CD8-positive, alpha-beta T cell (primary cell): ENCODE measurements at regions of chr7 and their contacts with region 1.

Region 1: DNA sequence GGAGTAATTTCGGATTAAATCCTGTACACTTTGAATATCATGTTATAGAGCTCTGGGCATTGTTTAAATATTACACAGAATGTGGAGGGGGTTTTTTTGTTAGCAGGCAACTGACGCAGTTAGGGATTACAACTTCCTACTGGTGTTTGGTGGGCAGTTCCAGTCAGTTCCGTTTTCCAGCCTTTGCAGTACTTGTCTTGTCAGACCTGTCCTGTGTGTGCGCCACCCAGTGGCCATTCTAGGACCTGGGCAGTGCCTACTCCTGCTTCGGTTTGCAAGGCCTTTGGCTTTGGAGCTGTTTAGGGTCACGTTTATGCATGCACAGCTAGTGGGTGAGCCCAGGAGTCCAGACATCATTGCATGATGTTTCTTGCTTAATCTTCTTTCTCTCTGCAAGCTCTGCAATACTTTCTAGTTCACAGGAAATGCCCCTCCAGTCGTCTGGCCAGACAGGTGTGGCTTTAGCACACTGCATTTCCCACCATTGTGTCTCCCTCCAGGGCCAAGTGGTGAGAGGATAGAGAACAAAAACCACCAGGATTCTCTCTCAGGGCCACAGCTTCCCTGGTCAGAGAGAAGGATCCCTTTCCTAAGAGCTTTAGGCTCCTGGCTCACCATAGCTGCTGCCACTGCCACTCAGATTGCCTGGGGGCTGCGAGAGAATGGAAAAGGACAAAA is 96.5 kb upstream of the TARP start:
- DNase-seq: peak; percentile 44 to 91 (median 86)
- ATAC-seq: peak; percentile 67
- H3K4me3 ChIP-seq: peak overlapping the region in 1 of 2 experiments; percentile 6
- H3K4me3 Mint-ChIP-seq: peak overlapping the region; percentile 57
- H3K27ac ChIP-seq: peak overlapping the region; percentile 36 to 79
- H3K27ac Mint-ChIP-seq: peak overlapping the region; percentile 93
- H3K4me1 ChIP-seq: peaks cover 61% of the 10 kb centered on the region
- H3K4me1 Mint-ChIP-seq: peaks cover 80% of the 10 kb centered on the region
- H3K27me3 ChIP-seq: no peaks in the 10 kb centered on the region
- H3K27me3 Mint-ChIP-seq: no peaks in the 10 kb centered on the region
- CTCF ChIP-seq: peak; percentile 77

Region 2: GRCh38 chr7:37916673-37917660 is 453.0 kb before region 1 on chr7 and contains the start of gene SFRP4:
- CTCF ChIA-PET with region 1: no interaction called
- POLR2A ChIA-PET with region 1: no interaction called
- intact Hi-C with region 1: loop called in 1 of 2 experiments (anchors 10 kb)
- DNase-seq: peak in 2 of 9 experiments; percentile 13 to 31
- ATAC-seq: no peak
- H3K4me3 ChIP-seq: no peak within 1 kb of the TSS
- H3K4me3 Mint-ChIP-seq: peak within 1 kb of the TSS; percentile 43
- H3K27ac ChIP-seq: no peak within 1 kb of the TSS
- H3K27ac Mint-ChIP-seq: no peak within 1 kb of the TSS
- H3K4me1 ChIP-seq: peaks cover 5% of the 10 kb centered on the region
- H3K4me1 Mint-ChIP-seq: peaks cover 20% of the 10 kb centered on the region
- H3K27me3 ChIP-seq: peaks cover 4 to 15% of the 10 kb centered on the region in 2 experiments
- H3K27me3 Mint-ChIP-seq: peaks cover 58% of the 10 kb centered on the region
- CTCF ChIP-seq: peak; percentile 27
- total RNA-seq, gene SFRP4: not detected

Region 3: DNA sequence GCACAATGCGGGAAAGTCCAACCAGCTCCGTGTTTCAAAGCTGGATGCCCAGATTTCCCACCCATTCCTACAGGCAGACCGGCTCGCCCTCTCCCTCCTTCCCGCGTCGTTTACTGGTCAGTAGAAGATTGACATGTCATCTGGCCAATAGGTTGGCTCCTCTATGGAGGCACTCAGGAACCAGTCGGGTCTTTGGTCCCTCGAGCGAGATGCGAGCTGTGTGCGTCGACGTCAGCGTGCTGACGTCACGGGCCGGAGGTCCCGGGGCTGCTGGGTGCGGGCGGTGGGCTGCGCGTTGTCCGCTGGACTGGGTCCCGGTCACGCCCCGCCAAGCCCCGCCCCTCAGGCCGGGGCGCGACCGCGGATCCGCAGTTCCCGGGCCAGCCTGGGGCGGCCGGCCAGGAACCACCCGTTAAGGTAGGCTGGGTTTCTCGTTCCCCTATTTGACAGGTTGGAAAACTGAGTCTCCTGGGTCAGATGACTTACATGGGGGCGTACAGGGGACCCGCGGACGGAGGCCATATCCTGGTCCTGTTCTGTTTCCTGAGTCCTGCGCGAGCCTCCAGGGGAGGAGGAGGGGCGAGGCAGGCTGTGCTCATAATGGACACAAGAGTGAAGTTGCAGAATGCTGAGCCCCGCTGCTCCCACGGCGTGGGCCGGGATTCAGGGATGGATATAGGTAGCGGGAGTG is 191.8 kb before region 1 on chr7 and contains the start of gene STARD3NL:
- CTCF ChIA-PET with region 1: interaction called, 5 read pairs
- POLR2A ChIA-PET with region 1: no interaction called
- intact Hi-C with region 1: loop called in 1 of 2 experiments (anchors 5 kb)
- DNase-seq: peak; percentile 64 to 100 (median 87)
- ATAC-seq: peak; percentile 94
- H3K4me3 ChIP-seq: peak within 1 kb of the TSS; percentile 72 to 93
- H3K4me3 Mint-ChIP-seq: peak within 1 kb of the TSS; percentile 96
- H3K27ac ChIP-seq: peak within 1 kb of the TSS; percentile 78 to 93
- H3K27ac Mint-ChIP-seq: peak within 1 kb of the TSS; percentile 96
- H3K4me1 ChIP-seq: peaks cover 24% of the 10 kb centered on the region
- H3K4me1 Mint-ChIP-seq: peaks cover 38% of the 10 kb centered on the region
- H3K27me3 ChIP-seq: no peaks in the 10 kb centered on the region
- H3K27me3 Mint-ChIP-seq: peaks cover 11% of the 10 kb centered on the region
- CTCF ChIP-seq: no peak
- total RNA-seq, gene STARD3NL: 22.4 to 22.7 TPM

Region 4: GRCh38 chr7:38215735-38216670 is 154.0 kb before region 1 on chr7:
- CTCF ChIA-PET with region 1: interaction called, 338 read pairs
- POLR2A ChIA-PET with region 1: interaction called, 24 read pairs
- intact Hi-C with region 1: loop called (anchors 1 kb)
- DNase-seq: peak; percentile 55 to 92 (median 78)
- ATAC-seq: peak; percentile 80
- H3K4me3 ChIP-seq: peak overlapping the region in 1 of 2 experiments; percentile 31
- H3K4me3 Mint-ChIP-seq: peak overlapping the region; percentile 19
- H3K27ac ChIP-seq: peak overlapping the region in 1 of 2 experiments; percentile 85
- H3K27ac Mint-ChIP-seq: peak overlapping the region; percentile 93
- H3K4me1 ChIP-seq: peaks cover 21% of the 10 kb centered on the region
- H3K4me1 Mint-ChIP-seq: peaks cover 47% of the 10 kb centered on the region
- H3K27me3 ChIP-seq: no peaks in the 10 kb centered on the region
- H3K27me3 Mint-ChIP-seq: no peaks in the 10 kb centered on the region
- CTCF ChIP-seq: peak; percentile 97

Region 5: GRCh38 chr7:38335492-38336147 is 34.3 kb before region 1 on chr7:
- CTCF ChIA-PET with region 1: interaction called, 76 read pairs
- POLR2A ChIA-PET with region 1: no interaction called
- intact Hi-C with region 1: loop called in 1 of 2 experiments (anchors 5 kb)
- DNase-seq: peak; percentile 62 to 92 (median 81)
- ATAC-seq: peak; percentile 78
- H3K4me3 ChIP-seq: peak overlapping the region; percentile 14 to 52
- H3K4me3 Mint-ChIP-seq: peak overlapping the region; percentile 80
- H3K27ac ChIP-seq: peak overlapping the region; percentile 20 to 70
- H3K27ac Mint-ChIP-seq: peak overlapping the region; percentile 89
- H3K4me1 ChIP-seq: peaks cover 26% of the 10 kb centered on the region
- H3K4me1 Mint-ChIP-seq: peaks cover 50% of the 10 kb centered on the region
- H3K27me3 ChIP-seq: no peaks in the 10 kb centered on the region
- H3K27me3 Mint-ChIP-seq: no peaks in the 10 kb centered on the region
- CTCF ChIP-seq: peak; percentile 82

Region 6: GRCh38 chr7:38383281-38383680 is 13.3 kb after region 1 on chr7:
- CTCF ChIA-PET with region 1: interaction called, 105 read pairs
- POLR2A ChIA-PET with region 1: no interaction called
- intact Hi-C with region 1: no loop called
- DNase-seq: no peak
- ATAC-seq: no peak
- H3K4me3 ChIP-seq: no peak overlapping the region
- H3K4me3 Mint-ChIP-seq: no peak overlapping the region
- H3K27ac ChIP-seq: no peak overlapping the region
- H3K27ac Mint-ChIP-seq: no peak overlapping the region
- H3K4me1 ChIP-seq: no peaks in the 10 kb centered on the region
- H3K4me1 Mint-ChIP-seq: peaks cover 23% of the 10 kb centered on the region
- H3K27me3 ChIP-seq: no peaks in the 10 kb centered on the region
- H3K27me3 Mint-ChIP-seq: no peaks in the 10 kb centered on the region
- CTCF ChIP-seq: no peak

Region 7: DNA sequence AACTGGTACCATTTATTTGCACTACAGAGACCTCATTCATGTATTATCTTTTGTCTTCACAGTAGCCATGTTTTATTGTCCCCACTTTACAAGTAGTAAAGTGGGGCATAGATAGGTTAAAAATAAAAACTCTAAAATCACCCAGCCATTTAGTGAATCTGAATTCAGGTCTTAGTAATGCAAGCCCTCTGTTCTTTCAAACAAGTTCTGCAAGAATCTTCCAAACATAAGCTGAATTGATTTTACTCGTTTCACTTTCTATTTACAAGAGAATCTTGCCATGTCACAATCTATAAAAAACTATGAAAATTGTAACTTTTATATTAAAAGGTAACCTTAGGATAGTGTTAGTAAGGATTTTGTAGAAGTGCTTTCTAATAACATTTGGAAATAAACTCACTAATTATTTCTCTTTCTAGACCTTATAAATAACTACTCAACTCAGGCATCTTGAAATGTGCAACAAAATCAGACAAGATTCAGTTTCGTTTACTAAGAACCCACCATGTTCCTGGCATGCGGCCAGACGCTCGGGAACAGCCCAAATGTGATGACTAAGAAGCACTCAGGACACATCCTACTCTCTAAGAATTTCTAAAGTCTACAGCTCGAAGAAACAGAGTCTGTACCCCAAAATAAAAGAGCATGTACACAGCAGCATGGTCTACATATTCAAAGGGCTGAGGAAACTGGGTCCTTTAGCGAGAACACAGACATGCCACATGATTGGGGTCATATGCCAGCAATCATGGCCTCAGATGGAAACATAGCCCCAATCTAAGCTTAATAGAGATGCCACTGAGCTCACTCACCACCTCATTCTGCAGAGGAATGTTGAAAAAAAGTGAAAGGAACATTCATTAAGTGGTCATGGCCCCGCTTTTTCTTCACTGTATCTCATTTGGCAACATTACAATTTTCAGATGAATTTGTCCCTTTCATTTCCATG is 93.6 kb after region 1 on chr7:
- CTCF ChIA-PET with region 1: no interaction called
- POLR2A ChIA-PET with region 1: no interaction called
- intact Hi-C with region 1: no loop called
- DNase-seq: peak; percentile 31 to 83 (median 77)
- ATAC-seq: peak; percentile 66
- H3K4me3 ChIP-seq: peak overlapping the region in 1 of 2 experiments; percentile 24
- H3K4me3 Mint-ChIP-seq: peak overlapping the region; percentile 68
- H3K27ac ChIP-seq: peak overlapping the region in 1 of 2 experiments; percentile 58
- H3K27ac Mint-ChIP-seq: peak overlapping the region; percentile 71
- H3K4me1 ChIP-seq: no peaks in the 10 kb centered on the region
- H3K4me1 Mint-ChIP-seq: peaks cover 15% of the 10 kb centered on the region
- H3K27me3 ChIP-seq: no peaks in the 10 kb centered on the region
- H3K27me3 Mint-ChIP-seq: no peaks in the 10 kb centered on the region
- CTCF ChIP-seq: no peak

Region 8: GRCh38 chr7:39948956-39949928 is 1579.3 kb after region 1 on chr7:
- CTCF ChIA-PET with region 1: no interaction called
- POLR2A ChIA-PET with region 1: no interaction called
- intact Hi-C with region 1: loop called in 1 of 2 experiments (anchors 10 kb)
- DNase-seq: peak; percentile 95 to 100 (median 99)
- ATAC-seq: peak; percentile 74
- H3K4me3 ChIP-seq: peak overlapping the region; percentile 83 to 93
- H3K4me3 Mint-ChIP-seq: peak overlapping the region; percentile 97
- H3K27ac ChIP-seq: peak overlapping the region; percentile 88 to 95
- H3K27ac Mint-ChIP-seq: peak overlapping the region; percentile 99
- H3K4me1 ChIP-seq: peaks cover 27% of the 10 kb centered on the region
- H3K4me1 Mint-ChIP-seq: peaks cover 42% of the 10 kb centered on the region
- H3K27me3 ChIP-seq: no peaks in the 10 kb centered on the region
- H3K27me3 Mint-ChIP-seq: no peaks in the 10 kb centered on the region
- CTCF ChIP-seq: no peak